ENCODE measurements at regions of chr6 and their contacts with region 1.

Region 1: DNA sequence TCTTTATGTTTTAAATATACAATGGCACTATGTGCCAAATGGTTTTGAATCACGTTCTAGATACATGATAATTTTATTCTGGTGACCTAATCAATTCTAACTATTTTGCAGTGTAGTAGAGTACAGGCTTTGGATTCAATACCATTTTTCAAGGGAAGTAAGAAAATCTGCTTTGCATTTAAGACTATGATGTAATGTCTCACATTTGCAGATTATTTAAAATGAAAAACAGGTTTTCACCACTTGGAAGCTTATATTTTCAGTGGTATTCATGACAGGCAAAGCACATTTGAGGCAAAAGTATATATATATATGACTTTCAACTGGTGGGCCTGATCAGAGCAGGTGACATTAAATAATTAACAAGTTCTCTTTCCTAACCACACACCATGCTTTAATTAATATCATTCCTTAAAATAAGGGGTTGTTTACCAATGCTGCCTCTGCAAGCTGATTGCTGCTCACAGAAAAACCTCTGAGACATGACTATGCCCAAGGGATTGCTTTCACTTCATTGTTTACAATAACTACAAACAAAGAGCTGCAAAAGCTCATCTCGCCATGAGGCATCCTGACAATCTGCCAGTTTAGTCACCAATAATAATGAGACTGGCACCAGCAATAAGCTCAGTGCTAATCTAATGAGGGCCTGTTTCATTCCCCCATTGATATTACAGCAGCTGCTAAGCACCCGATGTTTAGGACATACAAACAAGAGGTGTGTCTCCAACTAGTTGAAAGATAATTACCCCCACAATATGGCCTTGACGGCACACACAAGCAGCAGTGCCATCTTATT is 1176.0 kb upstream of the GJE1 start:
- DNase-seq: no peak
- ATAC-seq: no peak
- H3K4me3 ChIP-seq: no peak overlapping the region
- H3K27ac ChIP-seq: no peak overlapping the region
- H3K4me1 ChIP-seq: no peaks in the 10 kb centered on the region
- H3K27me3 ChIP-seq: no peaks in the 10 kb centered on the region
- CTCF ChIP-seq: no peak

Region 2: GRCh38 chr6:140253096-140253495 is 703.7 kb before region 1 on chr6:
- intact Hi-C with region 1: no loop called
- DNase-seq: no peak
- ATAC-seq: no peak
- H3K4me3 ChIP-seq: no peak overlapping the region
- H3K27ac ChIP-seq: no peak overlapping the region
- H3K4me1 ChIP-seq: no peaks in the 10 kb centered on the region
- H3K27me3 ChIP-seq: no peaks in the 10 kb centered on the region
- CTCF ChIP-seq: no peak

Region 3: DNA sequence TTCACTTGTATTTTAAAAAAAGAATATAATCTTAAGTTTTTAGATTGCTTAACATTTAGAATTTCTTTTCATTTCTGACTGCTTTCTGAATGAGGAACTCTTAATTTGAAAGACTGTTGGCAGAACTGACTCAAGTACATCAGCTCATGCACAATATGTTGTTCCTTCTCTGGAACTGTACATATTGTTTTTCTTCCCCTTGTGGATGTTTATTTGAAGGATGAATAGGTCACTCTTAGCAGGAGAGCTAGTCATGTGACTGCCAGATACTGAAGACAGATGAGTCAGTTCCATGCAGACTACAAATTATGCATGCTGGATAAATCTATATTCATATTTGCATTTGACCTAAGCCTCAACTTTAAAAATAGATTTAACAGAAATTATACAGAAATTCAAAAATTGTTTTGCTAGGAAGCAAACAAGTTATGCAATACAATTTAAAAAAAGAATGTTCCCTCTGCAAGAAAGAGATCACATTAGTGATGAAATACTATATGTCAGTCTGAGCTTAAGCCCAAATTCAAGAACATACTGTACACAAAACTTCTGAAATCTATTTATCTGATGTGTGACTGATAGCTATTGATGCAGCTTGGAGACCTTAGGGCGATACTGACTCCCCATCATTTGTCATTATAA is 98.9 kb before region 1 on chr6:
- intact Hi-C with region 1: no loop called
- DNase-seq: no peak
- ATAC-seq: peak in 3 of 4 donors; percentile 37 to 81 (median 60)
- H3K4me3 ChIP-seq: no peak overlapping the region
- H3K27ac ChIP-seq: no peak overlapping the region
- H3K4me1 ChIP-seq: peaks cover 10% of the 10 kb centered on the region
- H3K27me3 ChIP-seq: no peaks in the 10 kb centered on the region
- CTCF ChIP-seq: no peak

Region 4: DNA sequence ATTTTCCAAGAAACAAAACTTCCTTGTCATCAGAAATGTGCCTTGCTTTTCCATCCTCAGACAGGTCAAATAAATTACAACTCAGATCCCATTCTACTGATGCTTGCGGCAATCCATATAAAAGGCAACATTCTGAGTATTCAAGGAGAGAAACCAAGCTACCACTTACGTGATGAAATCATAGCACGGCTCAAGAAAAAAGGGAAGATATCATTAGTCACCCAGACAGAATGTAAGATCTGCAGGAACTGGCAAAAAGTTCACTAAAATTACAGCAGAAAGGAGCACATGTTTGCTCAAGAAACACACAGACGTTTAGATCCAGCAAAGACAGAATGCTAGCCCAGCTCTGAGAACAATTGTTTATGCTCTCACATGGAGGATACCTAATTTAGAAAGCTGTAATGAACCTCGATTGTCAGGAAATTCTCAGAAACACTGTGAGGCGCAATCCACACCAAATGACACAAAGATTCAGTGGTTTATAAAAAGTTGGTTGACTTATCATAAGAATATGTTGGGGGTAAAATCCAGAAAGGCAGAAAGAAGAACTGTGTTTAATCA is 1649.2 kb after region 1 on chr6:
- intact Hi-C with region 1: loop called in 1 of 2 experiments (anchors 10 kb)
- DNase-seq: no peak
- ATAC-seq: no peak
- H3K4me3 ChIP-seq: no peak overlapping the region
- H3K27ac ChIP-seq: no peak overlapping the region
- H3K4me1 ChIP-seq: no peaks in the 10 kb centered on the region
- H3K27me3 ChIP-seq: peaks cover 0 to 3% (median 0%) of the 10 kb centered on the region in 3 donors
- CTCF ChIP-seq: no peak